Transverse colon (tissue), 4 donors: ENCODE measurements at regions of chr19 and their contacts with region 1.

Region 1: DNA sequence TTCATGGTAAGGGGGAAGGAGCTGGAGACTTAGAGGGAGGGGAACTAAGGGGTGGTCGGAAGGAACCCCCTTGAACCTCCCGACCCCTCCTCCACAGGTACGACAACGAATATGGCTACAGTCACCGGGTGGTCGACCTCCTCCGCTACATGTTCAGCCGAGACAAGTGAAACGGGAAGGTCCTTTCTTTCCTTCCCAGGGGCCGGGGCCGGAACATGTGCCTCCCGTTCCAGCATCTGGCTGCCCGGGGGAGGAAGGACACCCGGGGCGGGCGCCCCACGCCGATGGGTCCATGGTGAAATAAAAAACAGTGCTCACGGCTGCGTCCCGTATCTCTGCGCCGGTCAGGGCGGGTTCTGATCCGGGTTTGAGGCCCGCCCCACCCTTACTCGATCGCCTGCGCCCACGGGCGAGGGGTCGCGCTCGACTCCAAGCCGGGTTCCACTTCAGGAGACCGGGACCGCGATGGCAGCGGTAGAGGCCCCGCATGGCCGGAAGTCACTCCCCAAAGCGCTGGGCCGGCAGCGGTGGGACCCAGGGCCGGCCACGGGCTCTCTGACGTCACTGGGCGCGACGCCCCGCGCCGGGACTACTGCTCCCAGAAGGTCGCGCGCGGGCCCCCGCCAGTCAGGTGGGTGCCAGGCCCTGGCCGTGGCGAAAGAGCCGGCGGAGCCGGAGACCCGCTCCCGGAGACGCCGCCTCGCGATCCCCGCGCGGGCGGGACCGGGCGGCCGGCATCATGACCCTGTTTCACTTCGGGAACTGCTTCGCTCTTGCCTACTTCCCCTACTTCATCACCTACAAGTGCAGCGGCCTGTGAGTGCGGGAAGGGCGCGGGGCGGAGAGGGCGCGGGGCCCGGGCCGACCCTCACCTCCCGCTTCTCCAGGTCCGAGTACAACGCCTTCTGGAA is at the start of gene TMEM147:
- DNase-seq: peak; percentile 95
- H3K4me3 ChIP-seq: peak within 1 kb of the TSS; percentile 75 to 87 (median 81)
- H3K27ac ChIP-seq: peak within 1 kb of the TSS; percentile 75 to 90 (median 83)
- H3K4me1 ChIP-seq: peaks cover 14 to 21% (median 17%) of the 10 kb centered on the region in 4 donors
- H3K27me3 ChIP-seq: no peaks in the 10 kb centered on the region
- CTCF ChIP-seq: no peak
- EP300 ChIP-seq: no peak
- POLR2A ChIP-seq: peak; percentile 52
- total RNA-seq, gene TMEM147: 29.5 to 77.0 (median 54.0) TPM

Region 2: DNA sequence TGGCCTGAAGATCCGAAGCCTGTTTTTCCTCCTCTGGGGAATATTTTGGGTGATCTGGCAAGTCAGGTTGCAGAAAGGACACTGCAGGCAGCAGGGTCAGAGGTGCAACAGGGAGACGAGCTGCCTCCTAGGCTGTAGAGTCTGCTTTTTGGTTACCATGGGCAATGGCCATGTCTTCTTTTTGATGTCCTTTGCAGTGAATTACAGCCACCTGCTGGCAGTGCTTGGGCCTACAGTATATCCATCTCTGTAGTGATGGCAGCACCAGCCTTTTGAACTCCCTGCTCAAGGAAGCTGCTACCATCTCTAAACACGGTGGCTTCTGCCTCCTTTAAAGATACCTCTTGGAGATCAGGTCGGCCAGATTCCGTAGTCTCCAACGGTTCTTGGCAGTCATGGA is 989.8 kb before region 1 on chr19:
- in situ Hi-C with region 1: no loop called
- intact Hi-C with region 1: no loop called
- DNase-seq: no peak
- H3K4me3 ChIP-seq: no peak overlapping the region
- H3K27ac ChIP-seq: no peak overlapping the region
- H3K4me1 ChIP-seq: no peaks in the 10 kb centered on the region
- H3K27me3 ChIP-seq: peaks cover 17% of the 10 kb centered on the region
- CTCF ChIP-seq: no peak
- EP300 ChIP-seq: no peak
- POLR2A ChIP-seq: no peak

Region 3: GRCh38 chr19:35417713-35418534 is 127.3 kb before region 1 on chr19:
- in situ Hi-C with region 1: no loop called
- intact Hi-C with region 1: no loop called
- DNase-seq: no peak
- H3K4me3 ChIP-seq: no peak overlapping the region
- H3K27ac ChIP-seq: no peak overlapping the region
- H3K4me1 ChIP-seq: peaks cover 0 to 11% (median 3%) of the 10 kb centered on the region in 4 donors
- H3K27me3 ChIP-seq: peaks cover 12% of the 10 kb centered on the region
- CTCF ChIP-seq: no peak
- EP300 ChIP-seq: no peak
- POLR2A ChIP-seq: no peak

Region 4: DNA sequence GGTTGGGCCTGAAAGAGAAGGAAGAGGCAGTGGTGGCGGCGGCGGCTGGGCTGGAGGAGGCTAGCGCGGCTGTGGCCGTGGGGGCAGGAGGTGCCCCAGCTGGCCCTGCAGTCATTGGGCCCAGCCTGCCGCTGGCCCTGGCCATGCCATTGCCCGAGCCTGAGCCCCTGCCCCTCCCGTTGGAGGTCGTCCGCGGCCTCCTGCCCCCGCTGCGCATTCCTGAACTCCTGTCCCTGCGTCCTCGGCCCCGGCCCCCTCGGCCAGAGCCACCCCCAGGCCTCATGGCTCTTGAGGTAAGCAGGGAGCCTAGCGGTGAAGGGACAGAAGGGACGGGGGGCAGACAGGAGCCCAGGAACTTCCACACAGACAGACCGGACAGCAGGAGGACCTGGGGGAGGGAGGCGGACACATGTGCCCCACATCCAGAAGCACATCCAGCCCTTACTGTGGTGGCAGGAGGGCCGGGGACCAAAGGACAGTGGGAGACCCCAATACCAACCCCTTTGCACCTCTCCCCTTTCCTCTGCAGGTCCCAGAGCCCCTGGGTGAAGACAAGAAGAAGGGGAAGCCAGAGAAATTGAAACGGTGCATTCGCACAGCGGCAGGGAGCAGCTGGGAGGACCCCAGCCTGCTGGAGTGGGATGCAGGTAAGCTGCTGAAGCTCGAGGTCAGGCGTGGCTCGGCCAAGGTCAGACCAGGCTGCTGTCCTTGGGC is 88.6 kb after region 1 on chr19:
- in situ Hi-C with region 1: no loop called
- intact Hi-C with region 1: loop called (anchors 10 kb)
- DNase-seq: no peak
- H3K4me3 ChIP-seq: no peak overlapping the region
- H3K27ac ChIP-seq: no peak overlapping the region
- H3K4me1 ChIP-seq: peaks cover 6 to 14% (median 11%) of the 10 kb centered on the region in 4 donors
- H3K27me3 ChIP-seq: no peaks in the 10 kb centered on the region
- CTCF ChIP-seq: no peak
- EP300 ChIP-seq: no peak
- POLR2A ChIP-seq: no peak

Region 5: GRCh38 chr19:35716801-35717666 is 171.8 kb after region 1 on chr19:
- in situ Hi-C with region 1: no loop called
- intact Hi-C with region 1: loop called (anchors 10 kb)
- DNase-seq: peak; percentile 89
- H3K4me3 ChIP-seq: peak overlapping the region; percentile 75 to 89 (median 86)
- H3K27ac ChIP-seq: peak overlapping the region; percentile 91 to 95 (median 92)
- H3K4me1 ChIP-seq: peaks cover 18 to 28% (median 24%) of the 10 kb centered on the region in 4 donors
- H3K27me3 ChIP-seq: no peaks in the 10 kb centered on the region
- CTCF ChIP-seq: peak; percentile 90 to 97 (median 93)
- EP300 ChIP-seq: no peak
- POLR2A ChIP-seq: peak; percentile 44

Region 6: DNA sequence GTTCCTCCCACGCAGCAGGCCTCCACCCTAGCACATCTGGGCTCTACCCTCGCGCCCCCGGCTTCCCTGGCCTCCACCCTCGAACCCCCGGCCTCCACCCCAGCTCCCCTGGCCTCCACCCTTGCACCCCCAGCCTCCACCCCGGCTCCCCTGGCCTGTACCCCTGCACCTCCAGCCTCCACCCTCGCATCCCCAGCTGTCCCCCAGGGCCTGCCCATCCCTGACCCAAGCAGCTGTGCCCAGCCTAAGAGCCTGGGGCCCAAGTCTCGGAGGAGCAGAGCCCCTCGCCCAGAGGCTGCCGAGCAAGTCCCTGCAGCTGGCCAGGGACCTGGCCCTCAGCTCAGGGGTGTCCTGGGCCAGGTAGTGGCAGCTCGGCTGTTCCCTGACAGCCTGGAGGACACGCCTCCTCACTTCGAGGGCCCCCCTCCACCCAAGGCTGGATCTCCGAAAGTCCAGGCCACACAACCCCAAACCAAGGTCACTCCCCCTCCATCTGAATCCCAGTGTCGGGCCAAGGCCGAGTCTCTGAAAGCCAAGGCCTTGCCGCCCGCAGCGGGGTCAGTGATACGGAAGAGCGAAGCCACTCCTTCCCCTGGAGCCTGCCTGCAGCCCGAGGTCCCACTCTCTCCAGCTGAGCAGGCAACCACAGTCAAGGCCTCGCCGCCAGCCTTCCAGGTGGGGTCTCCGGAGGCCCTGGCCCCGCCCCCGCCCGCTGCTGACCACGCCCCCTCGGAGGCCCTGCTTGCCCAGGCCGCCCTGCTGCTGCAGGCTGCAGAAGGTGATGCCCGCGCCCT is 222.2 kb after region 1 on chr19:
- in situ Hi-C with region 1: no loop called
- intact Hi-C with region 1: no loop called
- DNase-seq: no peak
- H3K4me3 ChIP-seq: no peak overlapping the region
- H3K27ac ChIP-seq: no peak overlapping the region
- H3K4me1 ChIP-seq: no peaks in the 10 kb centered on the region
- H3K27me3 ChIP-seq: no peaks in the 10 kb centered on the region
- CTCF ChIP-seq: no peak
- EP300 ChIP-seq: no peak
- POLR2A ChIP-seq: no peak